ENCODE measurements at regions of chr2 and their contacts with region 1.

Region 1: DNA sequence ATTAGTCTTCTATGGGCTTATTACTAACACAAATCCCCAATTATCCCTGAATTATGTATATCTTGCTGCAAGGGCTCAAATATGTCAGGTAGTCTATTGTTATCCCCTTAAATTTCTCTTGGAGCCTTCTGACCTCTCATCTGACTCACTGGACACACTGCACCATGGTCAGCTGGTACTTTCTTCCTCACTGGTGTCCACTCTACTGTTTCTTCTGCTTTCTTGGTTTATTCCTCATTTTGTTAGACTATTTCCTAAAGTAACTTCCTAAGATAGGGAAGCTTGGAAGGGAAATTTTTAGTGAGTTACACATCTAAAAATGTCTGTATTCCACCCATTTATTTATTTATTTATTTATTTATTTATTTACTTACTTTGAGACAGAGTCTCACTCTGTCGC is 26.5 kb downstream of the WDR35 start:
- DNase-seq: no peak
- H3K4me3 ChIP-seq: no peak overlapping the region
- H3K27ac ChIP-seq: no peak overlapping the region
- H3K4me1 ChIP-seq: no peaks in the 10 kb centered on the region
- H3K27me3 ChIP-seq: no peaks in the 10 kb centered on the region
- CTCF ChIP-seq: no peak

Region 2: GRCh38 chr2:19738707-19739106 is 224.7 kb before region 1 on chr2:
- CTCF ChIA-PET with region 1: no interaction called
- POLR2A ChIA-PET with region 1: no interaction called
- intact Hi-C with region 1: no loop called
- DNase-seq: no peak
- H3K4me3 ChIP-seq: no peak overlapping the region
- H3K27ac ChIP-seq: no peak overlapping the region
- H3K4me1 ChIP-seq: no peaks in the 10 kb centered on the region
- H3K27me3 ChIP-seq: no peaks in the 10 kb centered on the region
- CTCF ChIP-seq: no peak

Region 3: DNA sequence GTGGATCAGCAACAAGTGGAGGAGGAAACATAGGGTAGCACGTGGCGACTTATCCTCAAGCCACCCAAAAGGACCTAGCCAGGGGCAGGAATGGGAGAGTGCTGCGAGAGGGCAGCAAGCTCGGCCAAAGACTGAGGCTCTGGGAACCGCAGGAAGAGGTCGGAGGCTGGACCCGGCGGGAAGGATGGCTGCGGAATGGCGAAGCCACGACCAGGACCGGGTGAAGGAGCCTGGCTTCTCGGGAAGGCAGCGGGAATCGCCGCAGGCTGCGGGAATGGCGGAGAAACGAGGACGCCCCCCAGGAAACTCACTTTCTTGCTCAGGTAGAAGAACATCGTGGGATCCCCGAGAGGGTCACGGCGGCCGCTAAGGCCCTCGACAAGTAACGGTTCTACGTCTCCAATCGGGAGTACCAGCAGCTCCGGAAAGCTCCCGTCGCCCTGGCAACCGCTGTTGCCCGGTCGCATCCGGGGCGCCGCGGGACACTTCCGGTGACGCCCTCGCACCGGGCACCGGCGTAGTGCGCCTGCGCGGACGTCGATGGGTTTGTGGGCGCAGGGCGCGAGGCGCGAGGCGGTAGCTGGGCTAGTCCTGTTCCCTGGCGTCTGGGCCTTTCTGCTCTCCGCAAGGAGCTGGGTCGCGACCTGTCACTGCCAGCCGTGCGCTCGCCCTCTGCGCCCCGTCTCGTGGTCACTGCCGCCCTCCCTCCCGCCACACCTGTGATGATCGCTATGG is 26.5 kb after region 1 on chr2 and contains the start of gene WDR35:
- CTCF ChIA-PET with region 1: interaction called, 12 read pairs
- POLR2A ChIA-PET with region 1: no interaction called
- intact Hi-C with region 1: no loop called
- DNase-seq: peak; percentile 78 to 94
- H3K4me3 ChIP-seq: peak within 1 kb of the TSS; percentile 85
- H3K27ac ChIP-seq: no peak within 1 kb of the TSS
- H3K4me1 ChIP-seq: peaks cover 19% of the 10 kb centered on the region
- H3K27me3 ChIP-seq: no peaks in the 10 kb centered on the region
- CTCF ChIP-seq: no peak
- total RNA-seq, gene WDR35: 7.4 and 8.2 TPM in 2 replicates